ENCODE measurements at regions of chr2 and their contacts with region 1.

Region 1: DNA sequence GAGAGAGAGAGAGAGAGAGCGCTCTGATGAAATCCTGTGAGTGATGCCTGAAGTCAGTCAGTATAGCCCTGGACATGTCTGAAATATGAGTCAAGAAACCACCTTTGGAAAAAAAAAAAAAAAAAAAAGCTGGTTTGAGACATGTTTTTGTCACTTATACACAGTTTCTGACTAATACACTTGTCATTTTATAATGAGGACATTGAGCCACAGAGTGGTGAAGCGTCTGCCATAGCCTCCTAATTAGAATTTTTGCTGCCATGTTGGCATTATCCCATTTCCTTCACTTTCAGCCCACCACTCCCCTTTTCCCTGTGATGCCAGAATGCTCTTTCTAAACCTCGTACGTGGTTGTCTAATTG is 15.7 kb upstream of the MYO3B start:
- DNase-seq: peak; percentile 35
- ATAC-seq: no peak
- H3K4me3 ChIP-seq: no peak overlapping the region
- H3K27ac ChIP-seq: no peak overlapping the region
- H3K4me1 ChIP-seq: peaks cover 4% of the 10 kb centered on the region; the same call in 1 of the 2 replicates
- H3K27me3 ChIP-seq: no peaks in the 10 kb centered on the region
- CTCF ChIP-seq: no peak
- POLR2A ChIP-seq: no peak
- RAD21 ChIP-seq: no peak

Region 2: DNA sequence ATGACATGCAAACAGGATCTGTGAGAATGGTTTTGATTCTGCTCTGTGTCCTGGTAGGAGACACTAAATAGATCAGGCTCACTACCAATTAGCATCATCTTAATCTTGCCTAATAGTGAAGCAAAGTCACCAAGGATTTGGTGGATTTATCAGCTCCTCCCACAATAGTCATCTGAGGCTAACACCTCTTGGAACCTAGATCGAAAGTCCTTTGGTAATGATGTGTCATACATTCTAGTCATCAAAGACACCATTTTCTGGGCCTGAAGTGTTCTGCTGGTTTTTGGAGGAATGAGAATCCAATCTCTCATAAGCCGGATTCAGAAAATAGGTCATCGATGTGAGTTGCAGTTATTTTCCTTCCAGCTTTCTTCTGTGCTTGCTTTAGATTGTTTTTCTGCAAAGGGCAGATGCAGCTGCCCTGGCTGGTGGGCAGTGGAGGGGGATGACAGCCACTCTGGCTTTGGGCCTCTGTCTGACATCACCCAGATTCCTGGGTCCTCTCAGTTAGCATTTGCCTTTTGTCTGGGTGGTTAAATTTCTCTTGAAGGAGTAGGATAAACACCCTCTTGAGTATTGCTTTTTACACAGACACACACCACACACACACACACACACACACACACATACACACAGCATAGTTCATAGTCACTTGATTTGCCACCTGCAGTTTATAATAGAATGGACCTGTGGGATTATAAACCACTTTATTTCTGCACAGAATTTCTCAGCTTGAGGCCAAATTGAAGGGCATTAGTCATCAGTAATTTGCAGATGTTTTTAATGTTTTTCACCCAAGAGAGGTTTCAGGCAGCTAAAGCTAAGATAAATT is 15.9 kb after region 1 on chr2 and contains the start of gene MYO3B:
- CTCF ChIA-PET with region 1: no interaction called
- POLR2A ChIA-PET with region 1: no interaction called
- dilution Hi-C with region 1: no loop called
- in situ Hi-C with region 1: no loop called
- intact Hi-C with region 1: loop called (anchors 2 kb)
- DNase-seq: peak; percentile 52
- ATAC-seq: peak; percentile 54
- H3K4me3 ChIP-seq: no peak within 1 kb of the TSS
- H3K27ac ChIP-seq: no peak within 1 kb of the TSS
- H3K4me1 ChIP-seq: peaks cover 2% of the 10 kb centered on the region; the same call in 1 of the 2 replicates
- H3K27me3 ChIP-seq: no peaks in the 10 kb centered on the region
- CTCF ChIP-seq: no peak
- POLR2A ChIP-seq: no peak
- RAD21 ChIP-seq: no peak
- total RNA-seq, gene MYO3B: not detected in 2 replicates

Region 3: DNA sequence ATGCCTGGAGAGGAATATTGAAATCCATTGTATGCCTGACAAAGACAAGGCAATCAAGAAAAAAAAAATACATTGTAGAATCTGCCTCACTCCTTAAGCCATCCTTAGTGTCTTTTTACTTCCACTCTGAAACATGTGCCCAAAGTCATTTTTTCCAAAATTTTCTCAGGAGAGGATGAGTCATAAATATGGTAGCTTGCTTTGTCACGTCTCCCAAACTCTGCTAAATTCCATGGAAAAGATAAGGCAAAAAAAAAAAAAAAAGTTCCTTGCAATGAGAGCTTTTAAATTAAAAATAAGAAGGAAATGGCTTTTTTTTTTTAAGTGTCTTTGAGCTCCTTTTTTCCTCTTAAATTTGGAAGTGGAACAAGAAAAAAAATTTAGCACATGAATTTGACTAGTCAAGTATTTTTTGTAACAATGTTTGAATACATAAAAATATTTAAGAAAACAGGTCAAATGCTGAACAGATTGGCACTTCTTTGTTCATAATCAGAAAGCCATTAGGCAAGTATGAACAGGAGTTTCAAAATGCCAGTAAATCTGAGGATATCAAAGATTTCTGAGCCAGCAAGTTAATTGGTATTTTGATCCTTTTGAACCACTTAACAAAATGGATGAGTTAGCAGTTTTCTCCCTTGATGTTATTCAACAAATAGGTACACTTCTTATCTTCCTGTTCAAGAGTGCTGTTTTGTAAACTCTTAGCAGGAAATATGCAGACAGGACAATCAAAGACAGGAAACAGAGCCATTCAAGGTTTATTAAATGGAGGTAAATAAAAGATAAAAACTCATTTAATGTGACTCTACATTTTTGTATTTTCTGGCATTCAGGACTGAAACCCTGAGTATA is 305.5 kb after region 1 on chr2:
- CTCF ChIA-PET with region 1: no interaction called
- POLR2A ChIA-PET with region 1: interaction called, 11 read pairs
- dilution Hi-C with region 1: no loop called
- in situ Hi-C with region 1: no loop called
- intact Hi-C with region 1: no loop called
- DNase-seq: no peak
- ATAC-seq: no peak
- H3K4me3 ChIP-seq: no peak overlapping the region
- H3K27ac ChIP-seq: no peak overlapping the region
- H3K4me1 ChIP-seq: no peaks in the 10 kb centered on the region
- H3K27me3 ChIP-seq: no peaks in the 10 kb centered on the region
- CTCF ChIP-seq: no peak
- POLR2A ChIP-seq: no peak
- RAD21 ChIP-seq: no peak

Measured in IMR-90 (cell line).